ENCODE measurements at regions of chr15 and their contacts with region 1.

Region 1: DNA sequence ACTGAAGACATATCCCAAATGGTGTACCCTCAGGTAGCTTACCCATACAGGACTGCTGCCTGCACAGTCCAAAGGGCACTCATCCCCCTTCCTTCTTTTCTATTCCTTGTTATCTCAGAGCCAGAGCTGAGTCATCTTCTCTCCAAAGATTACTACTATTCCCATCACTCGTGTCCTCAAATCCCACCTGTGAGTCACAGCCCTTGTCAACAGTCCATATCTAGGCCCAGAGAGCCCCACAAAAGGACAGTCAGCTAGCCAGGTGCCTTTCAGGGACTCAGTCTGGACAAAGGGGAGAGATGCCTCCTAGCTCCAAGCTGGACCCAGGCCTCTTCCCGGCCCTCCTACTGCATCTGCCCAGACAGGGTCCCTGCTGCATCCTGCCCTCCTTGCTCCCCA is 11.0 kb downstream of the PARP16 start:
- DNase-seq: no peak
- ATAC-seq: no peak

Region 2: GRCh38 chr15:65171429-65171828 is 104.3 kb before region 1 on chr15:
- intact Hi-C with region 1: no loop called
- DNase-seq: no peak
- ATAC-seq: no peak

Region 3: GRCh38 chr15:65184868-65185738 is 90.6 kb before region 1 on chr15 and contains the start of gene CLPX:
- intact Hi-C with region 1: loop called (anchors 5 kb)
- DNase-seq: peak; percentile 94
- ATAC-seq: peak; percentile 96
- total RNA-seq, gene CLPX: 51.5 TPM

Region 4: GRCh38 chr15:65550681-65551098 is 275.0 kb after region 1 on chr15:
- intact Hi-C with region 1: no loop called
- DNase-seq: no peak
- ATAC-seq: no peak

Measured in Right ventricle myocardium superior (tissue), 1 donor.